PC-9 (cell line): ENCODE measurements at regions of chr20 and their contacts with region 1.

Region 1: DNA sequence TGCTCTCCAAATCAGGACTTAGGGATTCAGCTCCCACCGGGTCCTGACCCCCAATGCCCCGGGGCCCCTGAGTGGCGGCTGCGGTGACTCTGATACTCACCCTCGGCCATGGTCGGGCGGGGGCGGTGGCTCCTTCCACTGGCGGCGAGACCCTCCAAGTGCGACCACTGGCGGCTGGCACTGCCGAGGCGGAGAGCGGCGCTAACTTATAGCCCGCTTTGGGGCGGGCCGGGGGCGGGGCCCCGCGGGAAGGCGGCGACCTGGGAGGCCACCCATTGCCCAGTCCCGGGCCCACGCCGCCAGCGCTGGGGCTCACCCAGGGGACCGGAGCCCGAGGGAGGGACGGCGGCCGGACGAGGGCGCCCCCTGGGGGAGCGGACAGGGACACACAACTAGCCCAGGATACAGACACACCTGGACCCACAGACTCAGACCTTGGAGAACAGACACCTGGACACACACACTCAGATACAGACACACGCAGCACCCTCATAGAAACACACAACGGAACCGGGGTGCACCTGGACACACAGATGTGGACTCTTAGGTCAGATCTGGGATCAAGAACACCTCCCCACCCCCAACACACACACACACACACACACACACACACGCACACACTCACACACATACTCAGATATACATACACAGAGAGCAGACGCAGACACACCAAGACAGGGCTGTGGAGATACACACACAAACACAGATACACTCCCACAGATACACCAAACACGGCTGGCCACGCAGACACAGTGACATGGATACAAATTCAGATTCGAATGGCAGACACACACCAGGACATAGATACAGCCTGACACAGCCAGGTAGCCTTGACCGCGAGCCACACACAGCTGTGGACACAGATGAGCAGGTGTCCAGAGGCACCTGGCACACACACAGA is at the start of gene TGM2:
- DNase-seq: peak; percentile 75 to 95
- H3K4me3 ChIP-seq: peak within 1 kb of the TSS; percentile 98
- H3K27ac ChIP-seq: peak within 1 kb of the TSS; percentile 52
- H3K4me1 ChIP-seq: peaks cover 72% of the 10 kb centered on the region
- H3K27me3 ChIP-seq: no peaks in the 10 kb centered on the region
- CTCF ChIP-seq: peak; percentile 88
- total RNA-seq, gene TGM2: 286 and 333 TPM in 2 replicates

Region 2: GRCh38 chr20:37534401-37535157 is 630.8 kb before region 1 on chr20:
- CTCF ChIA-PET with region 1: interaction called, 11 read pairs
- POLR2A ChIA-PET with region 1: no interaction called
- intact Hi-C with region 1: no loop called
- DNase-seq: peak; percentile 64 to 68
- H3K4me3 ChIP-seq: no peak overlapping the region
- H3K27ac ChIP-seq: no peak overlapping the region
- H3K4me1 ChIP-seq: no peaks in the 10 kb centered on the region
- H3K27me3 ChIP-seq: no peaks in the 10 kb centered on the region
- CTCF ChIP-seq: peak; percentile 85

Region 3: GRCh38 chr20:37901654-37902503 is 263.5 kb before region 1 on chr20:
- CTCF ChIA-PET with region 1: no interaction called
- POLR2A ChIA-PET with region 1: no interaction called
- intact Hi-C with region 1: loop called (anchors 10 kb)
- DNase-seq: peak in 1 of 2 experiments; percentile 33
- H3K4me3 ChIP-seq: no peak overlapping the region
- H3K27ac ChIP-seq: no peak overlapping the region
- H3K4me1 ChIP-seq: no peaks in the 10 kb centered on the region
- H3K27me3 ChIP-seq: peaks cover 29% of the 10 kb centered on the region
- CTCF ChIP-seq: peak; percentile 54

Region 4: GRCh38 chr20:38062890-38063289 is 102.4 kb before region 1 on chr20:
- CTCF ChIA-PET with region 1: interaction called, 19 read pairs
- POLR2A ChIA-PET with region 1: interaction called, 10 read pairs
- intact Hi-C with region 1: no loop called
- DNase-seq: no peak
- H3K4me3 ChIP-seq: no peak overlapping the region
- H3K27ac ChIP-seq: no peak overlapping the region
- H3K4me1 ChIP-seq: no peaks in the 10 kb centered on the region
- H3K27me3 ChIP-seq: no peaks in the 10 kb centered on the region
- CTCF ChIP-seq: no peak

Region 5: GRCh38 chr20:38109591-38110524 is 55.5 kb before region 1 on chr20:
- CTCF ChIA-PET with region 1: interaction called, 3 read pairs
- POLR2A ChIA-PET with region 1: interaction called, 3 read pairs
- intact Hi-C with region 1: loop called (anchors 1 kb)
- DNase-seq: peak; percentile 87 to 99
- H3K4me3 ChIP-seq: no peak overlapping the region; the same call in 1 of the 2 replicates
- H3K27ac ChIP-seq: peak overlapping the region; percentile 92
- H3K4me1 ChIP-seq: peaks cover 58% of the 10 kb centered on the region
- H3K27me3 ChIP-seq: no peaks in the 10 kb centered on the region
- CTCF ChIP-seq: no peak

Region 6: GRCh38 chr20:38143646-38144554 is 21.4 kb before region 1 on chr20:
- CTCF ChIA-PET with region 1: interaction called, 4 read pairs
- POLR2A ChIA-PET with region 1: no interaction called
- intact Hi-C with region 1: loop called (anchors 2 kb)
- DNase-seq: peak; percentile 89 to 99
- H3K4me3 ChIP-seq: no peak overlapping the region; the same call in 1 of the 2 replicates
- H3K27ac ChIP-seq: peak overlapping the region; percentile 97
- H3K4me1 ChIP-seq: peaks cover 56% of the 10 kb centered on the region
- H3K27me3 ChIP-seq: no peaks in the 10 kb centered on the region
- CTCF ChIP-seq: no peak

Region 7: DNA sequence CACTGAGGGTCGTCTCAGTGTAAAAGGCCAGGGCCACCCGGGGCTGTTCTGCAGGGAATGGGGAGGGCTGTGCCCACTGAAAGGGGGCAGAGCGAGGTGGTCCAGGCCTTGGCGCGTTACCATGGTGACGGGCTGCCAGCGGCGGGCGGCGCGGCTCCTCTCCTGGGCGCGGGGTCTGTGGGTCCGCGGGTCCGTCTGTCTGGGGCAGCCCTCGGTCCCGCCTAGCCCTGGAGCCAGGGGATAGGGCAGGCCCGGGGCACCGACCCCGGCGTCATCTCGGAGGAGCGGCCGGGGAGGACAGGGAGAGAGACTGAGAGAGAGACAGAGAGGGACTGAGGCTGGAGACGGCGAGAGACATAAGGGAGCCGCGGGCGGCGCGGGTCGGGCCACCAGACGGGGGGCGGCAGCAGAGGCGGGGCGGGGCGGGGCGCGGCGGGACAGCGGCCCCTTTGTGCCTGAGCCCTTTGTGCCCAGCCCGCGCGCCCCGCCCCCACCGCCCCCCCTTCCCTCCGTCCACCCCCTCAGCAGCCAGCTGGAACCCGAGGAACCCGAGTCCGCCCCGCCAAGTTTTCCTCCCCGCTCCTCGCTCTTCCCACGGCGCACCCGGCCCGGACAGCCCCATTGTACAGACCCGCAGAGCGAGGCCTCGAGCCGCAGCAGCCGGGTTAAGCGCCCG is 95.2 kb after region 1 on chr20 and contains the start of gene KIAA1755:
- CTCF ChIA-PET with region 1: no interaction called
- POLR2A ChIA-PET with region 1: no interaction called
- intact Hi-C with region 1: no loop called
- DNase-seq: peak in 1 of 2 experiments; percentile 22
- H3K4me3 ChIP-seq: no peak within 1 kb of the TSS
- H3K27ac ChIP-seq: no peak within 1 kb of the TSS
- H3K4me1 ChIP-seq: no peaks in the 10 kb centered on the region
- H3K27me3 ChIP-seq: peaks cover 16% of the 10 kb centered on the region; the same call in 1 of the 2 replicates
- CTCF ChIP-seq: no peak
- total RNA-seq, gene KIAA1755: 0.22 and 0.30 TPM in 2 replicates

Region 8: GRCh38 chr20:38321959-38322598 is 156.7 kb after region 1 on chr20:
- CTCF ChIA-PET with region 1: no interaction called
- POLR2A ChIA-PET with region 1: no interaction called
- intact Hi-C with region 1: loop called (anchors 5 kb)
- DNase-seq: peak in 1 of 2 experiments; percentile 47
- H3K4me3 ChIP-seq: no peak overlapping the region
- H3K27ac ChIP-seq: no peak overlapping the region
- H3K4me1 ChIP-seq: no peaks in the 10 kb centered on the region
- H3K27me3 ChIP-seq: peaks cover 49% of the 10 kb centered on the region
- CTCF ChIP-seq: peak; percentile 81

Region 9: GRCh38 chr20:38387953-38388352 is 222.6 kb after region 1 on chr20:
- CTCF ChIA-PET with region 1: no interaction called
- POLR2A ChIA-PET with region 1: no interaction called
- intact Hi-C with region 1: no loop called
- DNase-seq: no peak
- H3K4me3 ChIP-seq: no peak overlapping the region
- H3K27ac ChIP-seq: no peak overlapping the region
- H3K4me1 ChIP-seq: no peaks in the 10 kb centered on the region
- H3K27me3 ChIP-seq: no peaks in the 10 kb centered on the region
- CTCF ChIP-seq: no peak; the same call in 1 of the 2 replicates